Right cardiac atrium (tissue), 5 donors: ENCODE measurements at regions of chr3 and their contacts with region 1.

Region 1: DNA sequence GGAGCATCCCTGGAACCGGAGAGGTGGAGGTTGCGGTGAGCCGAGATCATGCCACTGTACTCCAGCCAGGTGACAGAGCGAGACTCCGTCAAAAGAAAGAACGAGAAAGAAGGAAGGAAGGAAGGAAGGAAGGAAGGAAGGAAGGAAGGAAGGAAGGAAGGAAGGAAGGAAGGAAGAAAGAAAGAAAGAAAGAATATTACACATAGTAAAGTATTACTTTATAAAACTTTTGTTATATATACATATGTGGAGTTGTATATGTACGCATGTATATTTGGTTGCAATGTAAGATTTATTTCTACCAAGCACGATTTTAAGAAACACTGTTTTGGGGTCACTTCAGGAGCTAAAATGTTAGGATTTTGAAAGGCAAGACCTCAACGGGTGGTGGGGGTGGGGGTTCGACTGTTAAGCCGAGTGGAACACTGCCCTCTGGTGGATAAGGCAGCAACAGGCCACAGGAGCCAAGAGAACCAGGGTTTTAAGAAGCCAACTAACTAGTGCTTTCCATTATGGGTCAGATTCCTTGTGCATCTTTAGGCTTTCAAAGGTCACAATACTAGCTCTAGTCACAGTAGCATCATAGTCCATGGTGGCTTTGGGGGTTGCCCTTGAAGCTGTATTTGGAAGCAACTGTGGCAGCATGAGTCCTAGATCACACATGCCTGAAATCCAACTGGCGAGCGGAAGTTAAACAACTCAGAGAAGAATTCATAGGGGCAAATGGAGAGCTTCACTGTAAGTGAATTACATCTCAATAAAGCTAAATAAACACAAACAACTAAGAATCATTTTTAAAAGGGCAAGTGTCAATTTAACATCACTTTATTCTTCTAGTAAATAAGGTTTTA is 22.5 kb downstream of the GLB1 start:
- DNase-seq: peak; percentile 35 to 77 (median 65)
- ATAC-seq: peak; percentile 63 to 73
- H3K4me3 ChIP-seq: no peak overlapping the region
- H3K27ac ChIP-seq: no peak overlapping the region
- H3K4me1 ChIP-seq: no peaks in the 10 kb centered on the region
- H3K27me3 ChIP-seq: no peaks in the 10 kb centered on the region

Region 2: GRCh38 chr3:32947789-32948238 is 126.6 kb before region 1 on chr3:
- intact Hi-C with region 1: loop called in 2 of 4 experiments (anchors 5 to 10 kb)
- DNase-seq: peak; percentile 78 to 94 (median 85)
- ATAC-seq: peak; percentile 83 to 90
- H3K4me3 ChIP-seq: no peak overlapping the region
- H3K27ac ChIP-seq: no peak overlapping the region
- H3K4me1 ChIP-seq: no peaks in the 10 kb centered on the region
- H3K27me3 ChIP-seq: no peaks in the 10 kb centered on the region